Calu3 (cell line): ENCODE measurements at regions of chr2 and their contacts with region 1.

Region 1: GRCh38 chr2:200713003-200713703 is 98.6 kb upstream of the BZW1 start:
- DNase-seq: peak; percentile 90
- H3K4me3 Mint-ChIP-seq: peak overlapping the region; percentile 39
- H3K27ac Mint-ChIP-seq: peak overlapping the region; percentile 95
- H3K4me1 Mint-ChIP-seq: peaks cover 28% of the 10 kb centered on the region
- H3K27me3 Mint-ChIP-seq: no peaks in the 10 kb centered on the region
- CTCF ChIP-seq: peak; percentile 75

Region 2: DNA sequence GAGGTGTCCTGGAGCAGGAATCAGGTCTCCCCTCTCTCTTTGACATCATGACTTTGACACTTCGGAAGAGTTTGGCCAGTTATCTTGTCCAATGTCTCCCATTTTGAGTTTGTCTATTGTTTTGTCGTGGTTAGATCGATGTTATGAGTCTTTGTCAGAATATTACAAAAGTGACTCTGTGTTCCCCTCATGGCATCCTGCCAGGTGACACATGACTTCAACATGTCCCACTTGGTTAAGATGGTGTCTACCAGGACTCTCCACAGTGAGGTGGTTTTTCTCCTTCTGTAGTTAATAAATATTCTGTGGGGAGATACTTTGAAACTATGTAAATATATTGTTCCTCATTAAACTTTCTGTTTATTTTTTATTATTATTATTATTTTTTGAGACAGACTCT is 21.9 kb after region 1 on chr2:
- CTCF ChIA-PET with region 1: interaction called, 24 read pairs
- intact Hi-C with region 1: loop called (anchors 1 kb)
- DNase-seq: no peak
- H3K4me3 Mint-ChIP-seq: no peak overlapping the region
- H3K27ac Mint-ChIP-seq: no peak overlapping the region
- H3K4me1 Mint-ChIP-seq: peaks cover 11% of the 10 kb centered on the region
- H3K27me3 Mint-ChIP-seq: no peaks in the 10 kb centered on the region
- CTCF ChIP-seq: no peak

Region 3: DNA sequence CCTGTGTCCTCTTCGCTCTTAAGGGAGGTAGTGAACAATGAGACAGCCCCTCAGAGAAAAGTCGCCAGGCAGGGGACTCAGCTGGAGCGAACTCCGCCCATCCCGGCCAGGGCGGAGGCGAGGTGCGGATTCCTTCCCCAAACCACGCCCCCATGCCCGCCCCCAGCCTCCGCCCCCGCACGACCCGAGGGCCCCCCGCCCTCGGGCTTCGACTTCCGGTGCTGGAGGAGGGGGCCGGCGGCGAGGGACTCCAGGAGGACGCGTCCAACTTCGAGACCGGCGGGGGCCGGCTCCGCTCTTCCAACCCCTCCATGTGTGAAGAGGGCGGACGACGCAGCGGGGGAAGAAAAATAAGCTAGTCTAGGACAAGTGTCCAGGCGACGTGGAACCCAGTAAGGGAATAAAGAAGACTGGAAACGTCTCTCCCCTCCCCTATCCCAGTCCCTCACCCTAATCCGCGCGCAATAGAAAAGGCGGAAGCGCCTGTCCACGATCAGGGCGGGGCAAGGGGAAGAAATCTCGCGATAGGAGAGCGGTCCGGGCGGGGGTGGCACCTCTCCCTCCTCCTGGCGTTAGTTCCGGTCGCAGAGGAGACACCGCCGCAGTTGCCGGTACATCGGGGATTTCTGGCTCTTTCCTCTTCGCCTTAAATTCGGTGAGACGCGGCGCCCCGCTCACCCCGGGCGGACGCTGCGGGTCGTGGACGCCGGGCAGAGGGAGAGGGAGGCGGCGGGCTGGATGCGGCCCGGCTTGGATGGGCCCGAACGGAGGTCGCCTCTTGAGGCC is 98.4 kb after region 1 on chr2 and contains the start of gene BZW1:
- CTCF ChIA-PET with region 1: interaction called, 6 read pairs
- intact Hi-C with region 1: loop called (anchors 1 kb)
- DNase-seq: peak; percentile 97
- H3K4me3 Mint-ChIP-seq: peak within 1 kb of the TSS; percentile 96
- H3K27ac Mint-ChIP-seq: peak within 1 kb of the TSS; percentile 85
- H3K4me1 Mint-ChIP-seq: peaks cover 38% of the 10 kb centered on the region
- H3K27me3 Mint-ChIP-seq: no peaks in the 10 kb centered on the region
- CTCF ChIP-seq: no peak
- total RNA-seq, gene BZW1: 240 and 254 TPM in 2 replicates

Region 4: GRCh38 chr2:200864176-200864976 is 151.2 kb after region 1 on chr2 and contains the start of gene CLK1:
- CTCF ChIA-PET with region 1: no interaction called
- intact Hi-C with region 1: loop called (anchors 2 kb)
- DNase-seq: peak; percentile 90
- H3K4me3 Mint-ChIP-seq: peak within 1 kb of the TSS; percentile 86
- H3K27ac Mint-ChIP-seq: peak within 1 kb of the TSS; percentile 87
- H3K4me1 Mint-ChIP-seq: peaks cover 37% of the 10 kb centered on the region
- H3K27me3 Mint-ChIP-seq: no peaks in the 10 kb centered on the region
- CTCF ChIP-seq: no peak
- total RNA-seq, gene CLK1: 73.1 and 83.5 TPM in 2 replicates

Region 5: GRCh38 chr2:200888704-200889625 is 175.8 kb after region 1 on chr2 and contains the starts of genes NIF3L1 and PPIL3:
- CTCF ChIA-PET with region 1: interaction called, 6 read pairs
- intact Hi-C with region 1: loop called (anchors 2 kb)
- DNase-seq: peak; percentile 97
- H3K4me3 Mint-ChIP-seq: peak within 1 kb of the TSS; percentile 96
- H3K27ac Mint-ChIP-seq: peak within 1 kb of the TSS; percentile 99
- H3K4me1 Mint-ChIP-seq: peaks cover 18% of the 10 kb centered on the region
- H3K27me3 Mint-ChIP-seq: no peaks in the 10 kb centered on the region
- CTCF ChIP-seq: no peak
- total RNA-seq, gene NIF3L1: 38.4 and 39.7 TPM in 2 replicates
- total RNA-seq, gene PPIL3: 28.0 and 31.5 TPM in 2 replicates

Region 6: GRCh38 chr2:201176081-201176481 is 462.9 kb after region 1 on chr2:
- CTCF ChIA-PET with region 1: interaction called, 4 read pairs
- intact Hi-C with region 1: loop called (anchors 5 kb)
- DNase-seq: peak; percentile 77
- H3K4me3 Mint-ChIP-seq: peak overlapping the region; percentile 39
- H3K27ac Mint-ChIP-seq: peak overlapping the region; percentile 88
- H3K4me1 Mint-ChIP-seq: peaks cover 41% of the 10 kb centered on the region
- H3K27me3 Mint-ChIP-seq: no peaks in the 10 kb centered on the region
- CTCF ChIP-seq: no peak